CD8-positive, alpha-beta T cell (primary cell): ENCODE measurements at regions of chr3 and their contacts with region 1.

Region 1: GRCh38 chr3:69161587-69162307 is 39.4 kb upstream of the LMOD3 start:
- DNase-seq: peak in 7 of 9 experiments; percentile 4 to 68 (median 20)
- ATAC-seq: peak; percentile 83
- H3K4me3 ChIP-seq: no peak overlapping the region
- H3K4me3 Mint-ChIP-seq: no peak overlapping the region
- H3K27ac ChIP-seq: no peak overlapping the region
- H3K27ac Mint-ChIP-seq: no peak overlapping the region
- H3K4me1 ChIP-seq: no peaks in the 10 kb centered on the region
- H3K4me1 Mint-ChIP-seq: no peaks in the 10 kb centered on the region
- H3K27me3 ChIP-seq: no peaks in the 10 kb centered on the region
- H3K27me3 Mint-ChIP-seq: peaks cover 5% of the 10 kb centered on the region
- CTCF ChIP-seq: peak; percentile 99

Region 2: DNA sequence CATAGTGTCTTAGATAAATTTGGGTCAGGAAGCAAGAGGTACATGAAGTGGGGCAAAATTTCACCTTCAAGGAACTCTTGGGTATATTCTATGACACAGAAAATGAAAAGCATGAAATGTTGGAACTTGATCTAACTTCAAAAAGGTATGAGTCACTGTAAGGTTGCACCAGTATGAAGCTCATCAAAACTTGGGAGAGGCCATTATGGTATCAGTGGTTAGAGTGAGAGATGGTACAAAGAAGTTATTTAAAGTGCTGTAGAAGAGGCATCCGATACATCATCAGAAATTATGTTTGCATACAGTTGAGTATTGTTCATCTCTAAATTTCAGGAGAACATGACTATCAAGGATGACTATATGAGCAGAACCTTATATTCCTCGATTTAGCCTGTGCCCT is 1204.5 kb before region 1 on chr3:
- CTCF ChIA-PET with region 1: no interaction called
- POLR2A ChIA-PET with region 1: no interaction called
- intact Hi-C with region 1: no loop called
- DNase-seq: no peak
- ATAC-seq: no peak
- H3K4me3 ChIP-seq: no peak overlapping the region
- H3K4me3 Mint-ChIP-seq: no peak overlapping the region
- H3K27ac ChIP-seq: no peak overlapping the region
- H3K27ac Mint-ChIP-seq: no peak overlapping the region
- H3K4me1 ChIP-seq: no peaks in the 10 kb centered on the region
- H3K4me1 Mint-ChIP-seq: no peaks in the 10 kb centered on the region
- H3K27me3 ChIP-seq: no peaks in the 10 kb centered on the region
- H3K27me3 Mint-ChIP-seq: no peaks in the 10 kb centered on the region
- CTCF ChIP-seq: no peak

Region 3: DNA sequence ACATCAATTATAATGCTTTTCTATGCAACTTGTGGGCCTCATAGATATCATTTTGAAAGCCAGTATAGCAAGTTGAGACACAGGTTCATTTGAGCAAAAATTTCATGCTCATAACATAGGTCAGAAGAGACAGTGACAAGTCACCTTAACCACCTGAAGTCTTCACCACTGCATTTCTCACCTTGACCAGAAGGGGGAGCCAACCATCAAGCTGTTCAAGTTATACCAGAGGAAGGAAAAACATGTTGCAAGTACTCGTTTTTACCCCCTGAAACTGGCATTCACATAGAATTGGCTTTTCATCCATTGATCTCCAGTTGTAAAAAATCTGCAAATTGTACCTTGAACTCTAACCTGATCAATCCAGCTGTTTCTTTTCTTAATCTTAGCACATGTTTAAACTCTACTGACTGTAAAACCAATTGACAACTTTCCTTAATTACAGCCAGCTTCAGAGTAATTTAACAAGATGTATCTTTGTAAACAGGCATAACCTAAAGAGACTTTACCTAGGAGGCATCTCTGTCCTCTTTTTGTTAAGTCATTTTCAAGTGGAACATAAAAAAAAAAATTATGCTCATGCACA is 40.8 kb before region 1 on chr3:
- CTCF ChIA-PET with region 1: interaction called, 16 read pairs
- POLR2A ChIA-PET with region 1: interaction called, 3 read pairs
- intact Hi-C with region 1: loop called in 1 of 2 experiments (anchors 2 kb)
- DNase-seq: peak; percentile 63 to 88 (median 82)
- ATAC-seq: peak; percentile 92
- H3K4me3 ChIP-seq: no peak overlapping the region
- H3K4me3 Mint-ChIP-seq: no peak overlapping the region
- H3K27ac ChIP-seq: no peak overlapping the region
- H3K27ac Mint-ChIP-seq: no peak overlapping the region
- H3K4me1 ChIP-seq: no peaks in the 10 kb centered on the region
- H3K4me1 Mint-ChIP-seq: peaks cover 5% of the 10 kb centered on the region
- H3K27me3 ChIP-seq: no peaks in the 10 kb centered on the region
- H3K27me3 Mint-ChIP-seq: no peaks in the 10 kb centered on the region
- CTCF ChIP-seq: peak; percentile 96

Region 4: GRCh38 chr3:69181592-69182211 is 20.0 kb after region 1 on chr3:
- CTCF ChIA-PET with region 1: interaction called, 10 read pairs
- POLR2A ChIA-PET with region 1: no interaction called
- intact Hi-C with region 1: no loop called
- DNase-seq: no peak
- ATAC-seq: no peak
- H3K4me3 ChIP-seq: no peak overlapping the region
- H3K4me3 Mint-ChIP-seq: no peak overlapping the region
- H3K27ac ChIP-seq: no peak overlapping the region
- H3K27ac Mint-ChIP-seq: no peak overlapping the region
- H3K4me1 ChIP-seq: no peaks in the 10 kb centered on the region
- H3K4me1 Mint-ChIP-seq: peaks cover 5% of the 10 kb centered on the region
- H3K27me3 ChIP-seq: no peaks in the 10 kb centered on the region
- H3K27me3 Mint-ChIP-seq: peaks cover 2% of the 10 kb centered on the region
- CTCF ChIP-seq: no peak

Region 5: DNA sequence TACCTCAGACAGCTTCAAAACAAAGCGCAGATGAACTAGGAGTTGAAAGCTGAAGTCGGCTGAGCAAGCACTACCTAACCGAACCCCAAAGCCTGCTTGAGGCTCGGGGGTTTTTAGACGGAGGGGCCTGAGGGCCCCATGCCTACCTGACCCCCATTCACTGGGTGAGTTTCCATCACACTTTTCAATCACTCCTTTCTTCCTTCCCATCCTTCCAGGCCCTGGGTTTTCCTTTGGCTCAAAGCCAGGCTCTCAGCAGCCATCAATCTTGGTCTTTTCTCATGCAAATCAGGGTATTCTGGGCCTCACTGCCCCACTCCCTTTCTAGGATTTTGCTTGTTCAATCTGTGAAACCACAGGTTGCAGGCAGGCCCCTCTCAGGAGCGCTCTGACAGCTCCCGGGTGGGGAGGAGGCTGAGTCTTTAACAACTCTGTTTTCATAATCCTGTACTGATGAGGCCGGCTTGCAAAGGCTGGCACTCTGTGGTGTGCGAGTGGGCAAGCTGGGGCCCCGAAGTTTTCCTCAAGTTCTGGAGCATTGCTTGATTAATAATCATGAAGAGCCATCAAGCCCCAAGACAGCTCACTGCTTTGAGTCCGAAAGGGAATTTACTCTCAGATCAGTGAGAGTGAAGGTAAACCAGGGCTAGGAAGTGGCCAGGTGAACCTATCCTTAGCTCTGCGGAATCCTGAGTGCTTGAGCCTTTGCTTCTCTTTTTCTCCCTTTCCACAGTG is 126.6 kb after region 1 on chr3:
- CTCF ChIA-PET with region 1: interaction called, 21 read pairs
- POLR2A ChIA-PET with region 1: no interaction called
- intact Hi-C with region 1: no loop called
- DNase-seq: peak in 3 of 9 experiments; percentile 16 to 50 (median 31)
- ATAC-seq: no peak
- H3K4me3 ChIP-seq: no peak overlapping the region
- H3K4me3 Mint-ChIP-seq: no peak overlapping the region
- H3K27ac ChIP-seq: no peak overlapping the region
- H3K27ac Mint-ChIP-seq: no peak overlapping the region
- H3K4me1 ChIP-seq: no peaks in the 10 kb centered on the region
- H3K4me1 Mint-ChIP-seq: peaks cover 9% of the 10 kb centered on the region
- H3K27me3 ChIP-seq: no peaks in the 10 kb centered on the region
- H3K27me3 Mint-ChIP-seq: no peaks in the 10 kb centered on the region
- CTCF ChIP-seq: no peak

Region 6: GRCh38 chr3:69410250-69410649 is 248.5 kb after region 1 on chr3:
- CTCF ChIA-PET with region 1: interaction called, 55 read pairs
- POLR2A ChIA-PET with region 1: no interaction called
- intact Hi-C with region 1: loop called (anchors 1 to 5 kb)
- DNase-seq: peak; percentile 38 to 74 (median 45)
- ATAC-seq: peak; percentile 75
- H3K4me3 ChIP-seq: no peak overlapping the region
- H3K4me3 Mint-ChIP-seq: no peak overlapping the region
- H3K27ac ChIP-seq: no peak overlapping the region
- H3K27ac Mint-ChIP-seq: no peak overlapping the region
- H3K4me1 ChIP-seq: no peaks in the 10 kb centered on the region
- H3K4me1 Mint-ChIP-seq: peaks cover 4% of the 10 kb centered on the region
- H3K27me3 ChIP-seq: no peaks in the 10 kb centered on the region
- H3K27me3 Mint-ChIP-seq: peaks cover 3% of the 10 kb centered on the region
- CTCF ChIP-seq: peak; percentile 67

Region 7: DNA sequence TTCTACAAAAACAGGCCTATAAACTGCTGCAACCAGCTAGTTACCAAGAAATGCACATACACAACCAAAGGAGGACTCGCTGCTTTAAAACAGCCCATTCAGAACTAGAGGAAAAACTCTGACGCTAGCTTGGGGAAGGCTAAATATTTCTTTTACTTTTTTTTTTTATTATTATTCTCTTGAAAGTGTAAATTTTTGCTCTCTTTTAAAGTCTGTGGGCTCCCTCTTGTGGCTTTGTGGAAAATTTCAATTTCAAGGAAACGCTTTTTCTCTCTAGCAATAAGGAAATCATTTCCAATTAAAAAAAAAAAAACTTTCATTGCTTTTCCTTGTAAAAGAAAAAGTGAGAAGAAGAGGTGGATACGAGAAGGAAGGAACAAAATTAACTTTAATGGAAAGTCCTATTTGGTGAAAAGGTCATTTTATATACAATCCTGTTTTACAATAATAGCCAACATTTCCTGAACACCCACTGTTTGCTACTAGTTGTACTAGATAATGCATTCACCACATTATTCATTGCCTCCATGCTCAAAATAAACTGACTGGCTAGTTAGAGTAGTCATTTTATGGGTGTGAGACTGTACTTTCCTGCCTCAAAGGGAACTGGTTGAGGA is 786.6 kb after region 1 on chr3:
- CTCF ChIA-PET with region 1: no interaction called
- POLR2A ChIA-PET with region 1: no interaction called
- intact Hi-C with region 1: loop called (anchors 5 to 10 kb)
- DNase-seq: peak in 1 of 9 experiments; percentile 3
- ATAC-seq: no peak
- H3K4me3 ChIP-seq: no peak overlapping the region
- H3K4me3 Mint-ChIP-seq: no peak overlapping the region
- H3K27ac ChIP-seq: no peak overlapping the region
- H3K27ac Mint-ChIP-seq: no peak overlapping the region
- H3K4me1 ChIP-seq: no peaks in the 10 kb centered on the region
- H3K4me1 Mint-ChIP-seq: no peaks in the 10 kb centered on the region
- H3K27me3 ChIP-seq: no peaks in the 10 kb centered on the region
- H3K27me3 Mint-ChIP-seq: no peaks in the 10 kb centered on the region
- CTCF ChIP-seq: peak; percentile 44